PC-9 (cell line): ENCODE measurements at regions of chr12 and their contacts with region 1.

Region 1: GRCh38 chr12:111785651-111786050 is 18.9 kb downstream of the ALDH2 start:
- DNase-seq: no peak
- H3K4me3 ChIP-seq: no peak overlapping the region
- H3K27ac ChIP-seq: no peak overlapping the region
- H3K4me1 ChIP-seq: peaks cover under 1% of the 10 kb centered on the region; the same call in 1 of the 2 replicates
- H3K27me3 ChIP-seq: no peaks in the 10 kb centered on the region
- CTCF ChIP-seq: no peak

Region 2: GRCh38 chr12:111887926-111888745 is 102.5 kb after region 1 on chr12:
- CTCF ChIA-PET with region 1: no interaction called
- POLR2A ChIA-PET with region 1: interaction called, 11 read pairs
- intact Hi-C with region 1: no loop called
- DNase-seq: no peak
- H3K4me3 ChIP-seq: no peak overlapping the region
- H3K27ac ChIP-seq: no peak overlapping the region
- H3K4me1 ChIP-seq: no peaks in the 10 kb centered on the region
- H3K27me3 ChIP-seq: no peaks in the 10 kb centered on the region
- CTCF ChIP-seq: no peak